Activated T-helper 1 cell treated with anti-CD3 and anti-CD28 coated beads, Interleukin-12 subunit alpha, Interleukin-12 subunit beta, Interleukin-2, Interleukin-4 antibody, amounts not matched to agents 30 ng/mL and 10 ng/mL and 1 ng/mL, durations not matched to agents 14 hours and 24 hours and 36 hours (primary cell): ENCODE measurements at regions of chr14 and their contacts with region 1.

Region 1: DNA sequence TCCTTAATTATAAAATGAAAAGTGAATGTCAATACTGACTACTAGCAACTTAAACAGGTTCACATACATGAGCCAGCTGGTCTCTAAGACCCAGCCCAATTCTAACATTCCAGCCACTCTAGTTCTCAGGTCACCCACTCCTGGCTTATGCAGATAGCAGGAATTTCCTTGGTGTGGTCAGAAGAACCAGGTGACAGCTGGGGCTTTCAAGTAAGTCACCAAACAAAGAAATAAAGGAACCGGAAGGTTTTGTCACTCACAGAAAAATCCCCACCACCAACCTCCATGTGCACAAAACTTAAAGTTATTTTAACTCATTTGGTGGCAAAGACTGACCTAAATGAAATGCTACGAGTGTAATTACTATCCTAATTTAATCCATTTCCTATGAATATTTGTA is 129.6 kb upstream of the CDKN3 start:
- DNase-seq: peak; percentile 9
- H3K4me3 Mint-ChIP-seq: no peak overlapping the region
- H3K27ac Mint-ChIP-seq: peak overlapping the region; percentile 14
- H3K4me1 Mint-ChIP-seq: peaks cover 17% of the 10 kb centered on the region
- H3K27me3 Mint-ChIP-seq: peaks cover 12% of the 10 kb centered on the region

Region 2: DNA sequence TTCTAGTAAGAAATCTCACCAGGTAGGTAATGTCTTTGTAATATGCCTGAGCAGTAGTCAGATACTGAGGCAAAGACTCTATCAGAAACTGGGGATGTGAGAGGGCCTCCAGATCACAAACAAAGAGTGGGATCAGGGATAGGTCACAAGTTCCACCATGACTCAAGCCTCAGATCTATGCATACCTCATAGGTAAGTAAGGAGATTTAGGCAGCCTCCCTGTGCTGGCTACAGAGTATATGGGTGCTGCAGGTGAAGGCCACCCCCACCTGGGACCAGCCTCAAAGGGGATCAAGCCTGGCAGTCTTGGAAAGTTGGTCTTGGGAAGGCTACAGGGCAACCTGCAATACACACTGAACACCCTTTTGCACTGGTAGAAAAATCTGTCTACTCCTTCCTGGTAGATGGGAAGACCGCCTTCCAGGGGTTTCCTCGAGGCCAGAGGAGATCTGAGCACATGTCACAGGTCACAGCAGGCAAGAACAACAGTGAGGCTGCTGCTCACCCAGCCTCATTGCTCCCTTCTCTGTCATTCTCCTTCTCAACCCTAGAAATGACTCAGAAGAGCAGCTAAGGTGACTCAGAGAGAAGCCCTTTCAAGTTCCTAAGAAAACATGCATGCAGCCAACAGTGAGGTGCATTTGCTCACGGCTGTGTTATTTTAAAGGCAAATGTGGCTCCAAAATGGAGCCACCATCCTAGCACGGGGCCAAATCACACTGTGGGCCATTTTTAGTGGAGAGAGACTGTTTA is 13.8 kb before region 1 on chr14:
- intact Hi-C with region 1: loop called (anchors 1 kb)
- DNase-seq: no peak
- H3K4me3 Mint-ChIP-seq: no peak overlapping the region
- H3K27ac Mint-ChIP-seq: peak overlapping the region; percentile 64
- H3K4me1 Mint-ChIP-seq: peaks cover 9% of the 10 kb centered on the region
- H3K27me3 Mint-ChIP-seq: peaks cover 5% of the 10 kb centered on the region

Region 3: DNA sequence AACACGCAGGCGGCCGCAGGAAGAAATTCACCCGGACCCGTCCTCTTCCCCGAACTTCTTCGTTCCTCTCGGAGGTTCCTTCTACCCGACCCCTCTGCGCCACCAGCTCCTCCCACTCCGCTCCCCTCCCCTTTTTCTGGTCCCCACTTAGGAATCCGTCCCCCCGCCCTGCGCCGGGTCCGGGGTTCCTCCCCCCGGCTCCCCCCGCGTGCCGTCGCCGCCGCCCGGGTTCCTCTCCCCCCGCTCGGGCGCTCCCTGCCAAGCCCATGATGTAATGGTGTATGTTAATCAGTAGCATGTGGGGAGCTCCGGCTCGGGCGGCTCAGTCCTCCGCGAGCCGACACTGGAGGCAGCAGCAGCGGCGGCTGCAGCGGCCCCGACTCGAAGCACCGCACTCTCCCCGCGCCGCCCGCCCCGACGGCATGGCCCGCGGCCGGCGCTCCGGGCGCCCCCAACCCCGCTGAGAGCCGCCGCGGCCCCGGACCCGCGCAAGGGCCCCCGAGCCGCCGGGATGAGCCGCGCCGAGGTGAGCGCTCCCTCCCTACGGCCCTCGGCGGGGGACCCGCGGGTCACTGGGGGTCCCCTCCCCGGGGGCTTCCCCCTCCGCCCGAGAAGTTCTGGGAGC is 298.7 kb after region 1 on chr14:
- intact Hi-C with region 1: no loop called
- DNase-seq: peak; percentile 61
- H3K4me3 Mint-ChIP-seq: peak overlapping the region; percentile 75
- H3K27ac Mint-ChIP-seq: no peak overlapping the region
- H3K4me1 Mint-ChIP-seq: peaks cover 21% of the 10 kb centered on the region
- H3K27me3 Mint-ChIP-seq: peaks cover 54% of the 10 kb centered on the region

Region 4: GRCh38 chr14:54579621-54580020 is 312.4 kb after region 1 on chr14:
- intact Hi-C with region 1: no loop called
- DNase-seq: no peak
- H3K4me3 Mint-ChIP-seq: no peak overlapping the region
- H3K27ac Mint-ChIP-seq: no peak overlapping the region
- H3K4me1 Mint-ChIP-seq: no peaks in the 10 kb centered on the region
- H3K27me3 Mint-ChIP-seq: peaks cover 13% of the 10 kb centered on the region